Caco-2 (cell line): ENCODE measurements at regions of chr22 and their contacts with region 1.

Region 1: GRCh38 chr22:23857606-23858483 is at the start of gene SLC2A11:
- DNase-seq: peak; percentile 95 to 97
- H3K4me3 ChIP-seq: peak within 1 kb of the TSS; percentile 53
- H3K4me3 Mint-ChIP-seq: peak within 1 kb of the TSS; percentile 80
- H3K27ac Mint-ChIP-seq: peak within 1 kb of the TSS; percentile 79
- H3K4me1 ChIP-seq: 0 out of 2 replicates have a peak, but pooled peaks cover 3% of the 10 kb centered on the region
- H3K4me1 Mint-ChIP-seq: peaks cover 7% of the 10 kb centered on the region
- H3K27me3 ChIP-seq: no peaks in the 10 kb centered on the region
- H3K27me3 Mint-ChIP-seq: no peaks in the 10 kb centered on the region
- CTCF ChIP-seq: no peak
- total RNA-seq, gene SLC2A11: 29.5 and 32.4 TPM in 2 replicates

Region 2: DNA sequence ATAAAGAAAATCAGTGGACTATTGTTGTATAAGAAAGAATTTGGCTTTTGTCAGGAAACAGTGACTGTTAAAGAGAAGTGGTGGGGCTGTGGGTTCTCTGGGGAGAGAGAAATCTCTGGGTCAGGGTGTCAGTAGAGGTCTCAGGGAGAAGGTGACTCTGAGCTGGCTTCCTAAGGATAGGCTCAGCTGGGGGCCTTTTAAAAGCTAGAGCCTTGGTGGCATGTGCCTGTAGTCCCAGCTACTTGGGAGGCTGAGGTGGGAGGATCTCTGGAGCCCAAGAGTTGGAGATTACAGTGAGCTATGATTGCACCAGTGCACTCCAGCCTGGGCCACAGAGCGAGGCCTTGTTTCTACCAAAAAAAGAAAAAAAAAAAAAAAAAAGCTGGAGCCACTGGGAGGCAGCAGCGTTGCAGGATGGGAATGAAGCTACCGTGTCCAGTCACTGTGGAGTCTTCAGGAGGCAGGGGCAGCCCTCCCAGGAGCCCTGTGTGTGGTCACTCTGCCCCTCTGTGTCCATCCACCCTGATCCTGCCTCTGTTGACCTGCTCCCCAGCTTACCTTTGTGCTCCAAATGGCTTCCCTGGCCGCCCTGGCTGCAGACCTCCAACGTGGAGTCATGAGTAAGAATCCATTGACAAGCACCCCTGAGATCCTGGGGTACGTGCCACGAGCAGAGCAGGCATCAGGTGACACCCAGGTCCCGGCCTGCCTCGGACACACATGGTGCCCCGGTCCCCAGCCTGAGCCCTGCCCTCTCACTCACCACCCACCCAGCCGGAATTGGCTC is 31.0 kb after region 1 on chr22:
- CTCF ChIA-PET with region 1: interaction called, 45 read pairs
- POLR2A ChIA-PET with region 1: interaction called, 45 read pairs
- intact Hi-C with region 1: loop called (anchors 5 kb)
- DNase-seq: peak in 1 of 2 experiments; percentile 44
- H3K4me3 ChIP-seq: no peak overlapping the region
- H3K4me3 Mint-ChIP-seq: no peak overlapping the region
- H3K27ac Mint-ChIP-seq: peak overlapping the region; percentile 69
- H3K4me1 ChIP-seq: peaks cover 11% of the 10 kb centered on the region
- H3K4me1 Mint-ChIP-seq: peaks cover 13% of the 10 kb centered on the region
- H3K27me3 ChIP-seq: no peaks in the 10 kb centered on the region
- H3K27me3 Mint-ChIP-seq: no peaks in the 10 kb centered on the region
- CTCF ChIP-seq: peak; percentile 32 to 48

Region 3: DNA sequence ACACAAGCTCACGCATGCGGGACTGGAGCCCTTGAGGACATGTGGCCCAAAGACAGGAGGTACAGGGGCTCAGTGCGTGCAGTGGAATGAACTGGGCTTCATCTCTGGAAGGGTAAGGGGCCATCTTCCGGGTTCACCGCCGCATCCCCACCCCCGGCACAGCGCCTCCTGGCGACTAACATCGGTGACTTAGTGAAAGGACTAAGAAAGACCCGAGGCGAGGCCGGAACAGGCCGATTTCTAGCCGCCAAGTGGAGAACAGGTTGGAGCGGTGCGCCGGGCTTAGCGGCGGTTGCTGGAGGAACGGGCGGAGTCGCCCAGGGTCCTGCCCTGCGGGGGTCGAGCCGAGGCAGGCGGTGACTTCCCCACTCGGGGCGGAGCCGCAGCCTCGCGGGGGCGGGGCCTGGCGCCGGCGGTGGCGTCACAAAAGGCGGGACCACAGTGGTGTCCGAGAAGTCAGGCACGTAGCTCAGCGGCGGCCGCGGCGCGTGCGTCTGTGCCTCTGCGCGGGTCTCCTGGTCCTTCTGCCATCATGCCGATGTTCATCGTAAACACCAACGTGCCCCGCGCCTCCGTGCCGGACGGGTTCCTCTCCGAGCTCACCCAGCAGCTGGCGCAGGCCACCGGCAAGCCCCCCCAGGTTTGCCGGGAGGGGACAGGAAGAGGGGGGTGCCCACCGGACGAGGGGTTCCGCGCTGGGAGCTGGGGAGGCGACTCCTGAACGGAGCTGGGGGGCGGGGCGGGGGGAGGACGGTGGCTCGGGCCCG is 36.3 kb after region 1 on chr22 and contains the start of gene MIF:
- CTCF ChIA-PET with region 1: interaction called, 45 read pairs
- POLR2A ChIA-PET with region 1: interaction called, 45 read pairs
- intact Hi-C with region 1: loop called (anchors 5 kb)
- DNase-seq: peak; percentile 97 to 99
- H3K4me3 ChIP-seq: peak within 1 kb of the TSS; percentile 84
- H3K4me3 Mint-ChIP-seq: peak within 1 kb of the TSS; percentile 94
- H3K27ac Mint-ChIP-seq: peak within 1 kb of the TSS; percentile 98
- H3K4me1 ChIP-seq: peaks cover 19% of the 10 kb centered on the region
- H3K4me1 Mint-ChIP-seq: peaks cover 13% of the 10 kb centered on the region
- H3K27me3 ChIP-seq: no peaks in the 10 kb centered on the region
- H3K27me3 Mint-ChIP-seq: no peaks in the 10 kb centered on the region
- CTCF ChIP-seq: peak; percentile 83 to 85
- total RNA-seq, gene MIF: 762 and 795 TPM in 2 replicates

Region 4: DNA sequence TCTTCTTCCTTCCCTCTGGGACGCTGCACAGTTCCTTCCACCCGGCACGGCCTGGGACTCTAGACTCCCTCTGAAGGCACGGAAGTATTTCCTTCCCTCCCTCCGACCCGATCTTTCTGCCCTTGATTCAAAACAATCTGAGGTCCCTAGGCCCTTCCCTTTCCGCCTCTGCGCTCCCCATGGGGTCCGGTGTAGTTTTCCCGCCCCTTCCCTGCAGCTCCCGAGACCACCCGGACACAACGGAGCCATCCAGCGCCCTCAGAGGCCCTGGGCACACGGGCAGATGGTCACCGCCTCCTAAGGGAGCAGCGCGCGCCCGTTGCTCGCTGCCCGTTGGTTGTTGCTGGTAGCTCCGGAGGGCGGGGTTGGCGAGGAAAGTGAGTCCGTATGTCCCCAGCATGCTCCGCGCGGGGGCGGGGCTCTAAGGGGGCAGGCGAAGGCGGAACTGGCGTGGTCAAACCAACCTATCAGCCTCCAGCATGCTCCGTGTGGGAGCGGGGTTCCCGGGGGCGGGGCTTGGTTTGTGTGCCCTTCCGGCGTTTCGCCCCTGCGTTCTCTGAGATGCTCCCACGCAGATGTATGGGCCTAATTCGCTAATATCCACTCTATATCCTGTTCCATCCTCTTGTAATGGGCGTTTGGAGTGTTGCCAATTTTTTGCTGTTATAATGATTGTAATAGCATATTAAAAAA is 56.0 kb after region 1 on chr22:
- CTCF ChIA-PET with region 1: interaction called, 10 read pairs
- POLR2A ChIA-PET with region 1: interaction called, 6 read pairs
- intact Hi-C with region 1: no loop called
- DNase-seq: peak; percentile 99
- H3K4me3 ChIP-seq: peak overlapping the region; percentile 51
- H3K4me3 Mint-ChIP-seq: peak overlapping the region; percentile 85
- H3K27ac Mint-ChIP-seq: peak overlapping the region; percentile 87
- H3K4me1 ChIP-seq: peaks cover 27% of the 10 kb centered on the region
- H3K4me1 Mint-ChIP-seq: peaks cover 16% of the 10 kb centered on the region
- H3K27me3 ChIP-seq: no peaks in the 10 kb centered on the region
- H3K27me3 Mint-ChIP-seq: no peaks in the 10 kb centered on the region
- CTCF ChIP-seq: no peak

Region 5: DNA sequence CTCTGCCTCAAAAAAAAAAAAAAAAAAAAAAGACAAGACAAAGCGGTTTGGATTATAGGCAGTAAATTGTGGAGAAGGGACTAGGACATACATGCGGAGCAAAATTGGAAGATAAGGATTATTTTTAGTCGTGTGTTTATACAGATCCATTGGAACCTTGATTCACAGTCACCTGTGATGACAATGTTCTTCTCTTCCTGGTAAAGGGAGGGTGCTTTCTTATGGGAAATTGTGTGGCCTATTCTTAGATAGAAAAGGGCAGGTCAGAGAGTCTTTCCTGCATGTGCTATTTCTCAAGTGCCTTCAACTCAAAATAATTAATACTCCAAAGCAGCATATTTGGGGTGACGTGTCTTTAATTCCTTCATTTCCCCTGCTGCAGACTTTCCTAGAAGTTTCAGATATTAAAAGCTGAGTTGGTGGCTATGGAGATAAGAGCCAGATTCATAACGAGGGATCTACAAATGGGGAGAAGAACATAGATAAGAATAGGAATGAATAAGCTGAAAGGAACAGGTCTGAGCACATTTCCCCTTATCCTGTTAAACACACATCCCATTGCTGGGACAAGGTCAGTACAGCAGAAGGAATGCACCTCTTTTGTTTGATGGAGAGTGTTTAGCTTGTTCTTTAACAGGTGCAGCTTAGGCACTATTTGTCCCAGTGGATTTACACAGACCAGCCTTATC is 80.6 kb after region 1 on chr22:
- CTCF ChIA-PET with region 1: no interaction called
- POLR2A ChIA-PET with region 1: interaction called, 12 read pairs
- intact Hi-C with region 1: no loop called
- DNase-seq: peak; percentile 68 to 81
- H3K4me3 ChIP-seq: no peak overlapping the region
- H3K4me3 Mint-ChIP-seq: peak overlapping the region; percentile 40
- H3K27ac Mint-ChIP-seq: peak overlapping the region; percentile 88
- H3K4me1 ChIP-seq: peaks cover 16% of the 10 kb centered on the region
- H3K4me1 Mint-ChIP-seq: peaks cover 13% of the 10 kb centered on the region
- H3K27me3 ChIP-seq: no peaks in the 10 kb centered on the region
- H3K27me3 Mint-ChIP-seq: no peaks in the 10 kb centered on the region
- CTCF ChIP-seq: no peak